Left ventricle myocardium superior (tissue), 1 donor: ENCODE measurements at regions of chr6 and their contacts with region 1.

Region 1: GRCh38 chr6:154156135-154156896 is 117.3 kb downstream of the OPRM1 start:
- DNase-seq: peak; percentile 47
- ATAC-seq: peak; percentile 76

Region 2: GRCh38 chr6:154218301-154218700 is 62.0 kb after region 1 on chr6:
- intact Hi-C with region 1: no loop called
- DNase-seq: no peak
- ATAC-seq: no peak

Region 3: GRCh38 chr6:154276810-154277628 is 120.7 kb after region 1 on chr6:
- intact Hi-C with region 1: loop called (anchors 5 kb)
- DNase-seq: no peak
- ATAC-seq: peak; percentile 53

Region 4: GRCh38 chr6:154367839-154368695 is 211.8 kb after region 1 on chr6:
- intact Hi-C with region 1: loop called (anchors 5 kb)
- DNase-seq: no peak
- ATAC-seq: no peak